Colonic mucosa (tissue), 4 donors: ENCODE measurements at regions of chr3 and their contacts with region 1.

Region 1: DNA sequence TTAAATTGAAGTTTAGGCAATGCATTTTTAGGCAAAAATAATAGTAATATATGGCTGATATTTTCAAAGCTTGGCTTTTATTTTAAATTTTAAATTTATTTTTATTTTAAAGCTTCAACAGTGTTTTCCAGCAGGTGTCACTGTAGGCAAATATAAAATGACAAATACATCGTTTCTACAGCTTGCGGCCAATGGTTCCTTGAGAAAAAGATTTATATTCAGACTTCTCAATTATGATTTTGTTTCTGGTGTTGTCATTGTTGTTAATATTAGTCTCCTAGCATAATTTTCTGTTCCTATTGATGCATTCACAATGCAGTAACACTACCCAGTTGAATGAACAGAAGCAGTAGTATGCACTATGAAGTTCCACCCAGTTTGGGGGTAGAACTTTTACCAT is 220.7 kb upstream of the DNAJC19 start:
- DNase-seq: no peak
- H3K4me3 ChIP-seq: no peak overlapping the region
- H3K27ac ChIP-seq: no peak overlapping the region
- H3K4me1 ChIP-seq: no peaks in the 10 kb centered on the region
- H3K27me3 ChIP-seq: no peaks in the 10 kb centered on the region
- CTCF ChIP-seq: no peak

Region 2: GRCh38 chr3:181700168-181701087 is 490.2 kb after region 1 on chr3:
- intact Hi-C with region 1: loop called (anchors 5 kb)
- DNase-seq: peak; percentile 71
- H3K4me3 ChIP-seq: no peak overlapping the region
- H3K27ac ChIP-seq: no peak overlapping the region
- H3K4me1 ChIP-seq: peaks cover 3% of the 10 kb centered on the region
- H3K27me3 ChIP-seq: peaks cover 90% of the 10 kb centered on the region
- CTCF ChIP-seq: peak; percentile 80